ENCODE measurements at regions of chr20 and their contacts with region 1.

Region 1: GRCh38 chr20:46905364-46906125 is 10.9 kb downstream of the EYA2 start:
- DNase-seq: no peak
- H3K4me3 ChIP-seq: no peak overlapping the region
- H3K27ac ChIP-seq: peak overlapping the region; percentile 50 to 53
- H3K4me1 ChIP-seq: peaks cover 0 to 6% of the 10 kb centered on the region in 2 donors
- H3K27me3 ChIP-seq: no peaks in the 10 kb centered on the region
- CTCF ChIP-seq: no peak

Region 2: DNA sequence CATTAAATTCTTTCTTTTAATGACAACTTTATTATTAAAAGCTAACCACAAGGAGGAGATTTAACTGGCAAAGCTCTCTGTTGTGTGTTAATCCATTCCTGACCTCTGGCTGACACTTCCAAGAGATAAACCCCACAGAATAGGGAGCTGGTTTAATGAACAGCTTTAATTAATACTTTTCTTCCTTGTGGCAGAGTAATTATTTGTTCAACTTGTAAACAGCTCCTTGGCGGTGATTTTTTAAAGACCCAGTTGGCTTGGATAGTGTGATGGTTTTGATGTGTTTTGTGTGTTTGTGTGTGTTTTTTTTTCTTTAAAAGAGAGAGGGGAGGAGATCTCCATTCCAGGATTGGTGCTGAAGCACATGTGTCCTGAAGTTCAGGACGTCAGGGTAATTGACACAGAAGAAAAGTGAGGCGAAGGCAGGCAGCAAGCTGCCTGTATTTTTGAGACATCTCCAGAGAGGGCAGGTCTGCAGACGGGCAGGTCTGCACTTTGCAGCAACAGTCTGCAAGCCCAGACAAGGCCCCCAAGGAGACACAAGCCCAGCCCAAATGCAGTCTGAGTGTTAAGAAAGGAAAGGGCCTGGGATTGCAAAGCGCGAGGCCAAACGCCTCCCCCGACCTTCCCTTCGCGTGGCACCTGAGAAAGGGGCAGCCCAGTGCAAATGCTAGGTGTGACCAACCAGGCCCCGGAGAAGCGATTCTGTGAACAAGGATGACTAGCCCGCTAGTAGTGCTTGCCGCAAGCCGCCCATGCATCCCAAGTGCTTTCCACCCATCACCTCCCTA is 220.2 kb after region 1 on chr20:
- intact Hi-C with region 1: loop called (anchors 10 kb)
- DNase-seq: no peak
- H3K4me3 ChIP-seq: no peak overlapping the region
- H3K27ac ChIP-seq: peak overlapping the region; percentile 46 to 51
- H3K4me1 ChIP-seq: peaks cover 0 to 17% of the 10 kb centered on the region in 2 donors
- H3K27me3 ChIP-seq: no peaks in the 10 kb centered on the region
- CTCF ChIP-seq: no peak

Measured in ascending aorta (tissue), 2 donors.